ENCODE measurements at regions of chr21 and their contacts with region 1.

Region 1: GRCh38 chr21:44873356-44874239 is at the start of gene PTTG1IP:
- DNase-seq: peak; percentile 100
- H3K4me3 Mint-ChIP-seq: peak within 1 kb of the TSS; percentile 97
- H3K27ac Mint-ChIP-seq: peak within 1 kb of the TSS; percentile 93
- H3K4me1 Mint-ChIP-seq: peaks cover 52% of the 10 kb centered on the region
- H3K27me3 Mint-ChIP-seq: no peaks in the 10 kb centered on the region
- total RNA-seq, gene PTTG1IP: 44.2 and 46.5 TPM in 2 replicates

Region 2: DNA sequence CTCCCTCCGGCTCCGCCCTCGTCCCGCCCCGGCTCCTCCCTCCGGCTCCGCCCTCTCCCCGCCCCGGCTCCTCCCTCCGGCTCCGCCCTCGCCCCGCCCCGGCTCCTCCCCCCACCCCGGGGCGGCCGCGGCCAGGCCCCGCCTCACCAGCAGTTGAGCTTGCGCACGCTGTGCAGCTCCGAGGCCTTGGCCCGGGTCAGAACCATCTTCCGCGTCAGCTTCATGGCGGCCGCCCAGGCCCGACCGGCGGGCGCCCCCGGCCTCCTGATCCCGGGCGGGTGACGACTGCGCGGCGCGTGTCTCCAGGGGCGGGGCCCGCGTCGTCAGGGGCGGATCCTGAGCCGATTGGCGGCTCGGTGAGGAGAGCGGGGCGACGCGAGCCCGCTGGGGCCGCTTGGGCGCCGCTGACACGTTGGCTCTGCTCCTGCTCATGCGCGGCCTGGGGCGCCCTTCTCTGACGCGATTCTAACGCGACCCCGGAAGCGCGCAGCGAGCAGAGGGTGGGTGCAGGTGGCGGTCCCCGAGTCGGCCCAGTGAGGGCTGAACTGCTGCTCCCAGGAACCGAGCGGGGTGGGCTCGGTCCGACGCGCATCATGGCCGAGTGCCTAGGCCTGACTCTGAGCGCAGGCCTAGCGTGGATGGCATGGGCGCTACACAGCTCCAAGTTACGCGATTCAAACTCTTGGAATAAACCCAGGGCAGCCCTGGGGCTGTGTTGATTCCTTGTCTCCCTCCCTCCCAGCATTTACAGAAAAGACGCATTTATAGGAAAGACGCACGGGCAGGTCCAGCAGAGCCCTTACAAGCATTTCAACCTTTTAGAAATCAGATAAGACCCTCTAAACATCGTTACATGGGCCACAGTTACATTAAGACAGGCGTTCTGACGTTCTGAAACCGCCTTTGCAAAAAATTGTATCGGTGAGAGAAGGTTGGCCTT is 534.4 kb before region 1 on chr21 and contains the start of gene CFAP410:
- intact Hi-C with region 1: loop called (anchors 2 kb)
- DNase-seq: peak; percentile 99
- H3K4me3 Mint-ChIP-seq: peak within 1 kb of the TSS; percentile 93
- H3K27ac Mint-ChIP-seq: peak within 1 kb of the TSS; percentile 92
- H3K4me1 Mint-ChIP-seq: peaks cover 13% of the 10 kb centered on the region
- H3K27me3 Mint-ChIP-seq: no peaks in the 10 kb centered on the region
- total RNA-seq, gene CFAP410: 15.1 and 18.5 TPM in 2 replicates

Region 3: GRCh38 chr21:44761011-44761729 is 112.4 kb before region 1 on chr21:
- intact Hi-C with region 1: no loop called
- DNase-seq: no peak
- H3K4me3 Mint-ChIP-seq: no peak overlapping the region
- H3K27ac Mint-ChIP-seq: no peak overlapping the region
- H3K4me1 Mint-ChIP-seq: peaks cover 12% of the 10 kb centered on the region
- H3K27me3 Mint-ChIP-seq: no peaks in the 10 kb centered on the region

Region 4: DNA sequence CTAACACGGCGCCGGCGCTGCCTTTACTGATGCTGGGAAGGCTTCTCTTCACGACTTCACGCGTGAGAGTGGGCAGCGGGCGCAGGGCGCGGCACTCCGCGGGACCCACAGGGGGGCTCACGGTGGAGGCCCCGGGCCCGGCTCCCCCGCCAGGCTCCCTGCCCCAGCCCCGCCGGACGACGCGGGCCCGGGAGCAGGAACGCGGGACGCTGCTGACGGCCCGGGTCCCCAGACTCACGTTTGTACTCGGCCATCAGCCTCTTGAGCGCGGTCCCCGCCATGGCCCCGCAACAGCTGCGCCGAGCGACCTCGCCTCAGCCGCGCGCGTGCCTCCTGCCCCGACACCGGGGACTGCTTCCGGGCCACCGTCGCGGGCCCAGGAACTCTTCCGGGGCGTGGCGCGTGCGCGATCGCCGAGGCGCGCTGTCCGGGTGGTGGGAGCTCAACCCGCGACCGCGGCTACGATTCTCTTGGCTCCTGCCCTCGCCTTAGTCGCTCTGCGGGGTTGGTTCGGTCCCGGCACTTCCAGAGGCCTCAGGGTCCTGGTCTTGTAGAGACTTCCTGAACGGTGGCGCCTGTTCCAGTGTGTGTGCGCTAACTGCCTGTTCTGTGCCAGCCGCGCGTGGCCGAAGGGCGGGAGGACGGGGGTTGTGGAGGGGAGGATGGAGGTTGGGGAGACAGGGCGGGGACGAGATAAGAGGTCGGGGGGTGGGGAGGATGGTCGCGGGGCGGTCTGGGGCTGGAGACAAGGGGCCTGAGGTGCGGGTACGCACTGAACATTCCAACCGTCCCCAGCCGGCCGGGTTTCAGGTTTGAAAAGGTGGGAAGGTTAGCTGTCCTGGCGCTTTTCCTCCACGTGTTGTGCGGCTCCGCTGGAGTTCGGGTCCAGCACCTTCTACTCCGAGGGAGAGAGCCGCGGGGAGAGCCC is 71.9 kb before region 1 on chr21 and contains the start of gene UBE2G2:
- intact Hi-C with region 1: loop called (anchors 1 kb)
- DNase-seq: peak; percentile 97
- H3K4me3 Mint-ChIP-seq: peak within 1 kb of the TSS; percentile 100
- H3K27ac Mint-ChIP-seq: peak within 1 kb of the TSS; percentile 93
- H3K4me1 Mint-ChIP-seq: peaks cover 37% of the 10 kb centered on the region
- H3K27me3 Mint-ChIP-seq: no peaks in the 10 kb centered on the region
- total RNA-seq, gene UBE2G2: 143 and 148 TPM in 2 replicates

Region 5: GRCh38 chr21:44845399-44846223 is 28.0 kb before region 1 on chr21:
- intact Hi-C with region 1: loop called (anchors 2 kb)
- DNase-seq: peak; percentile 91
- H3K4me3 Mint-ChIP-seq: peak overlapping the region; percentile 73
- H3K27ac Mint-ChIP-seq: peak overlapping the region; percentile 70
- H3K4me1 Mint-ChIP-seq: peaks cover 10% of the 10 kb centered on the region
- H3K27me3 Mint-ChIP-seq: no peaks in the 10 kb centered on the region

Region 6: GRCh38 chr21:44927587-44928461 is 54.2 kb after region 1 on chr21:
- intact Hi-C with region 1: loop called (anchors 2 kb)
- DNase-seq: peak; percentile 91
- H3K4me3 Mint-ChIP-seq: peak overlapping the region; percentile 94
- H3K27ac Mint-ChIP-seq: peak overlapping the region; percentile 99
- H3K4me1 Mint-ChIP-seq: peaks cover 78% of the 10 kb centered on the region
- H3K27me3 Mint-ChIP-seq: no peaks in the 10 kb centered on the region

Measured in activated CD4-positive, alpha-beta T cell treated with anti-CD3 and anti-CD28 coated beads, Interleukin-2, amount 10 ng/mL, durations not matched to agents 24 days and 14 days (primary cell).